WTC11 (cell line): ENCODE measurements at regions of chr2 and their contacts with region 1.

Region 1: GRCh38 chr2:55168221-55169154 is 63.6 kb downstream of the CLHC1 start:
- DNase-seq: no peak
- ATAC-seq: 0 out of 2 replicates have a peak, but pooled peaks have one; percentile 38
- H3K4me3 Mint-ChIP-seq: no peak overlapping the region
- H3K27ac Mint-ChIP-seq: no peak overlapping the region; the same call in 1 of the 2 replicates
- H3K4me1 Mint-ChIP-seq: peaks cover 26% of the 10 kb centered on the region
- H3K27me3 Mint-ChIP-seq: no peaks in the 10 kb centered on the region
- CTCF ChIP-seq: peak; percentile 34; the same call in 1 of the 2 replicates

Region 2: GRCh38 chr2:55050133-55050994 is 118.1 kb before region 1 on chr2 and contains the start of gene RTN4:
- CTCF ChIA-PET with region 1: interaction called, 25 read pairs
- POLR2A ChIA-PET with region 1: interaction called, 8 read pairs
- DNase-seq: peak; percentile 99
- ATAC-seq: peak; percentile 91
- H3K4me3 Mint-ChIP-seq: peak within 1 kb of the TSS; percentile 99
- H3K27ac Mint-ChIP-seq: peak within 1 kb of the TSS; percentile 99
- H3K4me1 Mint-ChIP-seq: peaks cover 40% of the 10 kb centered on the region
- H3K27me3 Mint-ChIP-seq: no peaks in the 10 kb centered on the region
- CTCF ChIP-seq: no peak
- total RNA-seq, gene RTN4: 175 to 202 TPM (median 178 TPM) in 3 replicates